HEK293 (cell line): ENCODE measurements at regions of chr10 and their contacts with region 1.

Region 1: DNA sequence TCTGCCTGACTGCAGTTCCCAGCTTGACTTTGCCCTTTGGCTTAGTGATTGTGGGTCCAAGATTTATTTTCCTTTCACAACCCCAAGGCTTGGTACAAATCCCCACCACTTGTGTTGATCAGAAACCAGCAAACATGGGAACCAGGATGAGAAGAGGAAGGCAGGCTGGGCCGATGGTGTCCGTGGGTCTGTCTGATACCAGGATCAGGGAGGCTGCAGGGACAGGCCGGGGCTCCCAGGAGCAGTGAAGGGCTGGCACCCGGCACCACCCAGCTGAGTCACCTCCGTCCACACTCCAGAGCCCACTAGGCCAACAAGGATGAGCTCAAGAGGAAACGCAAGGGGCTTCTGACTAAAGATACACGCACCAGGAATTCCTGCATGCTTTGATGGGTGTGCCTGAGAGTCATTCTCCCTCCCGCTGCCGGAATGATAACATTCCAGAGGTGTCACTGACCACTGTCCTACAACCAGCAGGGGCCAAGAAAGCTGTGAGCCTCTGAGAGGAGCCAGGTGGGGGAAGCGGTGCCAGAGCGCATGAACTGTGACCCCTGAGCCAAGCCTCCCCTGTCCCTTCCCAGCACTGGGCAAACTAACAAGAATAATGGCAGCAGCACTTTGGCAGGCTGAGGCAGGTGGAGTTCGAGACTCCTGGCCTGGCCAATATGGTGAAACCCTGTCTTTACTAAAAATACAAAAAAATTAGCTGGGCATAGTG is 29.2 kb upstream of the PROSER2 start:
- H3K4me3 ChIP-seq: no peak overlapping the region
- H3K27ac ChIP-seq: no peak overlapping the region
- H3K4me1 ChIP-seq: no peaks in the 10 kb centered on the region
- CTCF ChIP-seq: no peak

Region 2: DNA sequence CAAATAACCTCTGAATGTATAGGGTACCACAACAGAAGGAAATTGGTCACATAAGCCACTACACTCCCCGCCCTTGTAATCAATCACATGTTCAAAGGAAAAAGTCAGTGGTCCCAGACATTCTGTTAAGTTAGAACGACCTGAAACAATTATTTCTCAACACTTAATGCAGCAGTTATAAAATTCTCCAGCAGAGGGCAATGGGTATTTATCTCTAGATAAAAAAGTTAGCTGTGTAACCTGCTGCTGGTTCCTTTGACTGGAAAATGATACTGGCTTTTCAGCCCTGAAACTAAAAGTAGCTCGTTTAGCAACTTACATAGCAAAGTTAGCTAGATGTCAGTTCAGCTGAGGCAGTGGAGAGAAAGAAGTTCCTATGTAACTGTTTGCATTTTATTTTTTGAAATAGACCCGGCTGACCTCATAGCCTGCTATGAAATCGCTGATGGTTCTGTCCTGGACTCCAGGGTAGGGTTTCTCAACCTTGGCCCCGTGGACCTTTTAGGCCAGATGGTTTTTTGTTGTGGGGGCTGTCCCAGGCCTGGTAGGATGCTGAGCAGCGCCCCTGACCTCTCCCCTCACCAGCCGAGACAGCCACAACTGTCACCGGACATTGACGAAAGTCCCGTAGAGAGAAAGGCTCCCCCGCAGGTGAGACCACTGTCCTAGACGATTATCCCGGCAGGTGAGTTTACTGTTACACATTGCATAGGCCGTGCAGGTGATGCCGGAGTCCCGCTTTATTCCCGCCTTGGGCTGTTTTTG is 10.9 kb before region 1 on chr10:
- CTCF ChIA-PET with region 1: interaction called, 11 read pairs
- POLR2A ChIA-PET with region 1: no interaction called
- H3K4me3 ChIP-seq: no peak overlapping the region
- H3K27ac ChIP-seq: no peak overlapping the region
- H3K4me1 ChIP-seq: no peaks in the 10 kb centered on the region
- CTCF ChIP-seq: peak; percentile 41

Region 3: DNA sequence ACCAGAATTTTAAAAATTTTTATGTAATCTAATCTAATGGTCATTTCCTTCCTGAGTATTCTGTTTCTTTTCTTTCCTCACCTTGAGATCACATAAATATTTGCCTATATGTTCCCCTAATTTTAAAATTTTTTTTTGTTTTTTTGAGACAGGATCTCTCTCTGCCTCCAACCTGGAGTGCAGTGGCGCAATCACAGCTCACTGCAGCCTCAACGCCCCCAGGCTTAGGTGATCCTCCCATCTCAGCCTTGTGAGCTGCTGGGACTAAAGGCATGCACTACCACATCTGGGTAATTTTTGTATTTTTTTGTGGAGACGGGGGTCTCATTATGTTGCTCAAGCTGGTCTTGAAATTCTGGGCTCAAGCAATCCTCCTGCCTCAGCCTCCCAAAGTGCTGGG is 25.1 kb after region 1 on chr10:
- CTCF ChIA-PET with region 1: interaction called, 15 read pairs
- POLR2A ChIA-PET with region 1: interaction called, 3 read pairs
- H3K4me3 ChIP-seq: no peak overlapping the region
- H3K27ac ChIP-seq: no peak overlapping the region
- H3K4me1 ChIP-seq: 0 out of 2 replicates have a peak, but pooled peaks cover under 1% of the 10 kb centered on the region
- CTCF ChIP-seq: no peak

Region 4: DNA sequence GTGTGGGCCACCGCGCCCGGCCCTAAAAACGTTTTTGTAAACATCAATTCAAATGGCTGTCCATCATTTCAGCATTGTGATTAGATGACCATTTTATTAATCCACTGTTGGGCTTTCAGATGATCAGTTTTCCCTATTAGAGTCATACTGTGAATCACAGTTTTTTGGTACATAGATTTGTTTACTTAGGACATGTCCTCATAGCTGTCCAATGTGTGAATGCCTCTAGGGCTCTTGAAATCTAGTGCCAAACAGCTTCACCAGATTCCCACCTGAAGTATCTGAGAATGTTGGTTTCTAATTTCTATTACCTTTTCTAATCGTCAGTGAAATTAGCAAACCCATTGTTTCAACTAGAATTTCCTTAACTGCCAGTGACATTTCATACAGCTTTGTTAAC is 181.9 kb after region 1 on chr10:
- CTCF ChIA-PET with region 1: no interaction called
- POLR2A ChIA-PET with region 1: no interaction called
- H3K4me3 ChIP-seq: no peak overlapping the region
- H3K27ac ChIP-seq: no peak overlapping the region
- H3K4me1 ChIP-seq: no peaks in the 10 kb centered on the region
- CTCF ChIP-seq: no peak